ENCODE measurements at regions of chr3 and their contacts with region 1.

Region 1: DNA sequence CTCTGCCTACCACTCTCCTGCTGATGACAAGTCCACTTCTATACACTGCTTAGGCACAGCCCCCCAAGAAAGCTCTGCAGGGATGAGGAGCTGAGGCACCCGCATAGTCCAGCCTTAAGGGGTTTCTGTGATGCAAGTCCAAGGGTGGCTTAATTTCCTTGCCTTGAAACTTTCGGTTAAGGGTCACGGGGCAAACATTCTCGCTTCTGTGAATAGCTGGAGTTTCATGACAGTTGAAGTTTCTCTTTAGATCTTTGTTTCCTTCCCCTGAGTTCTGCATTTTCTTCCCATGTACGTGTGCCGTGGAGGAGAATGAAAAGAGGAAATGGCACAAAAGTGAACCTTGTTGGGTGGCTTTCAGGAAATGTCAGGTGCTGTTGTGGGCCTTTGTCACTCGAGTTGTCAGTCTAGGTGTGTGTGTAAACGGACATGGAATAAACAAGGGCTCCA is 7.0 kb downstream of the GPR160 start:
- DNase-seq: peak in 3 of 14 experiments; percentile 25 to 45 (median 40)
- ATAC-seq: no peak
- H3K4me3 ChIP-seq: no peak overlapping the region
- H3K4me3 Mint-ChIP-seq: peak overlapping the region; percentile 21
- H3K27ac ChIP-seq: no peak overlapping the region
- H3K27ac Mint-ChIP-seq: peak overlapping the region; percentile 56
- H3K4me1 ChIP-seq: peaks cover 17% of the 10 kb centered on the region
- H3K4me1 Mint-ChIP-seq: peaks cover 26% of the 10 kb centered on the region
- H3K27me3 ChIP-seq: no peaks in the 10 kb centered on the region
- H3K27me3 Mint-ChIP-seq: no peaks in the 10 kb centered on the region
- CTCF ChIP-seq: no peak

Region 2: DNA sequence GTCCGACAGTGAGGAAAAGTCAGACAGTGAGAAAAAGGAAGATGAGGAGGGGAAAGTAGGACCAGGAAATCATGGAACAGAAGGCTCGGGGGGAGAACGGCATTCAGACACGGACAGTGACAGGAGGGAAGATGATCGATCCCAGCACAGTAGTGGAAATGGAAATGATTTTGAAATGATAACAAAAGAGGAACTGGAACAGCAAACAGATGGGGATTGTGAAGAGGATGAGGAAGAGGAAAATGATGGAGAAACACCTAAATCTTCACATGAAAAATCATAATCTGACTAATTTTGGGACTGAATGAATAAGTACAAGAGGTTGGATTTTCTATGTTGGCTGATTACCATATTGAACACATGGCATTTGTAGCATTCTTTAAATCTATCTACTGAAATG is 52.0 kb before region 1 on chr3:
- CTCF ChIA-PET with region 1: no interaction called
- POLR2A ChIA-PET with region 1: no interaction called
- intact Hi-C with region 1: no loop called
- DNase-seq: no peak
- ATAC-seq: no peak
- H3K4me3 ChIP-seq: no peak overlapping the region
- H3K4me3 Mint-ChIP-seq: no peak overlapping the region
- H3K27ac ChIP-seq: no peak overlapping the region
- H3K27ac Mint-ChIP-seq: no peak overlapping the region
- H3K4me1 ChIP-seq: no peaks in the 10 kb centered on the region
- H3K4me1 Mint-ChIP-seq: no peaks in the 10 kb centered on the region
- H3K27me3 ChIP-seq: no peaks in the 10 kb centered on the region
- H3K27me3 Mint-ChIP-seq: no peaks in the 10 kb centered on the region
- CTCF ChIP-seq: no peak

Region 3: DNA sequence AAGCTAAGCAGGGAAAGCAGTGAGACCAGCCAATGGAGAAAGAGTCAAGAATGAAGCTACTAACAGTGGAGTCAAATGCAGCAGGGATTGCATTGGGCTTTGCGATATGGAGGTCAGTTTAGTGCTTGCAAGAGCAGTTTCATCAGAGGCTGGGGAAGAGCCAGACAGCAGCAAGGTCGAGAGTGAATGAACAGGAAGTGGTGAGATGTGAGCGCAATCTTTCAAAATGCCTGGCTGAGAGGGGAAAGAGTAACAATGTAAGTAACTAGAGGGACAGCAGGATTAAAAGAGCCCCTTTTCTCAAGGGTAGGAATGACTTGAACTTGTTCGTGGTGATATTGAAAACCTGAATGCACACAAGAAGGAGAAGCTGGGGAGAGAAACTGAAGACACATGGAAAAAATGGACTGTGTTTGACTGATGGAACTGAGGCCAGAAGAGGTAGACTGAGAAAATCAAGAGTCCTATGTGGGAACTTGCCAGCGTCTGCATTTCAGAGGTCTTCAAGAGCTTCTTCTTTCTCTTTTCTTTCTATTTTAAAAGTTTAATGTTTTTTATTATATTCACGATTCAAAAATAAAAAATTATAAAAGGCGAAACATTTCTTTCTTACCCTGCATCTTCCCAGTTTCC is 37.7 kb before region 1 on chr3:
- CTCF ChIA-PET with region 1: no interaction called
- POLR2A ChIA-PET with region 1: no interaction called
- intact Hi-C with region 1: loop called in 1 of 2 experiments (anchors 5 kb)
- DNase-seq: peak in 13 of 14 experiments; percentile 2 to 63 (median 24)
- ATAC-seq: peak; percentile 86
- H3K4me3 ChIP-seq: no peak overlapping the region
- H3K4me3 Mint-ChIP-seq: peak overlapping the region; percentile 10
- H3K27ac ChIP-seq: no peak overlapping the region
- H3K27ac Mint-ChIP-seq: peak overlapping the region; percentile 42
- H3K4me1 ChIP-seq: peaks cover 25% of the 10 kb centered on the region
- H3K4me1 Mint-ChIP-seq: peaks cover 50% of the 10 kb centered on the region
- H3K27me3 ChIP-seq: no peaks in the 10 kb centered on the region
- H3K27me3 Mint-ChIP-seq: no peaks in the 10 kb centered on the region
- CTCF ChIP-seq: no peak

Region 4: DNA sequence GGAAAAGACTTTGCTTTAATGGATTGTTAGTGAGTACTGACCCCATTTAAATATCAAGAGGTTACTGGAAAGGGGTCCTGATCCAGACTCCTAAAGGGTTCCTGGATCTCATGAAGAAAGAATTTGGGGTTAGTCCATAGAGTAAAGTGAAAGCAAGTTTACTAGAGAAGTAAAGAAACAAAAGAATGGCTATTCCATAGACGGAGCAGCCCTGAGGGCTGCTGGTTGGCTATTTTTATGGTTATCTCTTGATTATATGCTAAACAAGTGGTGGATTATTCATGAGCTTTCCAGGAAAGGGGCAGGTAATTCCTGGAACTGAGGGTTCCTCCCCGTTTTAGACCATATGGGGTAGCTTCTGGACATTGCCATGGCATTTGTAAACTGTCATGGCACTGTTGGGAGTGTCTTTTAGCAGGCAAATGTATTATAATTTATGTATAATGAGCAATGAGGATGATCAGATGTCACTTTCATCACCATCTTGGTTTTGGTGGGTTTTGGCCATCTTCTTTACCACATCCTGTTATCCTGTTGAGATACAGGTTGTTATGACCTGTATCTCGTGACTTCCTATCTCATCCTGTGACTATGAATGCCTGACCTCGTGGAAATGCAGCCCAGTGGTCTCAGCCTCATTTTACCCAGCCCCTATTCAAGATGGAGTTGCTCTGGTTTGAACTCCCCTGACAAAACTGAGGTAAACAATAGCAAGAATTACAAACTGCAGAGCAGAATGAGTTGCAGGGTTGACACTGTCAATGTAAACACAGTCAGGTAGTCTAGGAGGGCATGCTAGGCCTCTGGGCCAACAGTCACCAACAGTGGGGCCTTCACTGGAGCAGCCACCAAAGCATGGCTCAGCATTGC is 17.4 kb before region 1 on chr3:
- CTCF ChIA-PET with region 1: no interaction called
- POLR2A ChIA-PET with region 1: no interaction called
- intact Hi-C with region 1: no loop called
- DNase-seq: peak in 2 of 14 experiments; percentile 17 to 62
- ATAC-seq: no peak
- H3K4me3 ChIP-seq: no peak overlapping the region
- H3K4me3 Mint-ChIP-seq: no peak overlapping the region
- H3K27ac ChIP-seq: no peak overlapping the region
- H3K27ac Mint-ChIP-seq: no peak overlapping the region
- H3K4me1 ChIP-seq: peaks cover 11% of the 10 kb centered on the region
- H3K4me1 Mint-ChIP-seq: peaks cover 26% of the 10 kb centered on the region
- H3K27me3 ChIP-seq: no peaks in the 10 kb centered on the region
- H3K27me3 Mint-ChIP-seq: no peaks in the 10 kb centered on the region
- CTCF ChIP-seq: no peak